IMR-90 (cell line): ENCODE measurements at regions of chr12 and their contacts with region 1.

Region 1: DNA sequence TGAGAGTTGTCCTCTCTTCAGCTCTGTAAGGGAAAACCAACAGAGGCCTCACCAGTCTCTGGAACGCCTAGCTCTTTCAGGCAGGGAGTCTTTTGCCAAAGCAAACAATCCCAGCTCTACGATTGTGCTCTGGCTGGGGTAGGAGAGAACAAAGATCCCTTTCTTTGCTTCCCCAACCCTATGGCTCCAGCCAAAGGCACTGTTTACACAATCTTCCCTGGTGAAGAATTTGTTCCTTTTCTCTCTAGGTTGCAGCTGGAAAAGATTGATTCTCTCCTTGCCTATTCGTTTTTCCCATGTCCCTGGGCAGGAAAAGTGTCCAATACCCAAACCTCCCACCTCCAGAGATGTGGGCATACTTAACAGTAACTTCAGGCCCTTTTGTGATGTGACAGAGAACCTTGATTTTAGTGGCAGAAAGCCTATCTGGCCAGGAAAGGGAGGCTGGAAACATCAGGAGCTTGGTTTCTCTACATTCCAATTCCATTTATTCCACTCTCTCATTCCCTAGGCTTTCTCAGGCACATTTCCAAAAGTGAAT is 16.8 kb downstream of the ATP5MC2 start:
- DNase-seq: peak; percentile 88
- ATAC-seq: peak; percentile 93
- H3K4me3 ChIP-seq: no peak overlapping the region
- H3K27ac ChIP-seq: peak overlapping the region; percentile 91
- H3K4me1 ChIP-seq: peaks cover 13% of the 10 kb centered on the region
- H3K27me3 ChIP-seq: no peaks in the 10 kb centered on the region
- CTCF ChIP-seq: no peak
- POLR2A ChIP-seq: no peak
- RAD21 ChIP-seq: no peak

Region 2: GRCh38 chr12:53585448-53586125 is 73.5 kb before region 1 on chr12:
- CTCF ChIA-PET with region 1: no interaction called
- POLR2A ChIA-PET with region 1: no interaction called
- dilution Hi-C with region 1: no loop called
- in situ Hi-C with region 1: no loop called
- intact Hi-C with region 1: no loop called
- DNase-seq: no peak
- ATAC-seq: no peak
- H3K4me3 ChIP-seq: no peak overlapping the region
- H3K27ac ChIP-seq: no peak overlapping the region
- H3K4me1 ChIP-seq: no peaks in the 10 kb centered on the region
- H3K27me3 ChIP-seq: no peaks in the 10 kb centered on the region
- CTCF ChIP-seq: no peak
- POLR2A ChIP-seq: no peak
- RAD21 ChIP-seq: no peak

Region 3: DNA sequence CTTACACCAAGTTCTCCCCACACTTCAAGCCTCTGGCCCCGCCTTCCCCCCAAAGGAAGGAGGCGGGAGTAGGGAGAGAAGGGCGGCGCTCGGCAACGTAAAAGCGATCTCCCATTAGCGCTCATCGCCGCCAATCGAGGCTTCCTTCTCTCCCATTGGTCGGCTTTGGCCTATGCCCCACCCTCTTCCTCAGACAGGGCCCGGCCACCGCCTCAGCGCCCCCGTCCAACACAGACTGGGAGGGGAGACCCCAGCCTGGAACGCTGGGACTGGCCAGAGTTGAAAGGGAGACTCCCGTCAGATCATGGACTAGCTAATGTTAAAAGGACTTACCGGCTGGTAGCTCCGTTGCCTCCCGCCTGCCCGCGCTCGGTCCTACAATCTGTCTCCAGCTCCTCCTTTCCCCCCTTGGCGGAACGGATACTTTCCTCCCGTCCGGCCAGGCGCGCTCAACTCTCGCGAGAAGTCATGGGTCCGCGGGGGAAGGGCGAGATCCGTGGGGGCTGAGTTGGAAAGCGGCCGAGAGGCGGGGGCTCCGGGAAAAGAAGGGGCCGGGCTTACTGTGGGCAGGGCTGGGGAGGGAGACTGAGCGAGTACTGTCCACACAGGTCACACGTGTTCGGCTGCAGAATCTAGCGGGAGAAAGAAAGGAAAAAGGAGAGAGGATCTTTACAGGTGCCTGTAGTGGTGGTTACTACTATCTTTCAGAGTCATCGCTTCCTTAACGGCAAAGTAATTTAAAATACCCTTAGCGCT is 33.0 kb before region 1 on chr12 and contains the start of gene ATF7:
- CTCF ChIA-PET with region 1: no interaction called
- POLR2A ChIA-PET with region 1: no interaction called
- dilution Hi-C with region 1: no loop called
- in situ Hi-C with region 1: no loop called
- intact Hi-C with region 1: no loop called
- DNase-seq: peak; percentile 97
- ATAC-seq: peak; percentile 98
- H3K4me3 ChIP-seq: peak within 1 kb of the TSS; percentile 70
- H3K27ac ChIP-seq: peak within 1 kb of the TSS; percentile 95
- H3K4me1 ChIP-seq: peaks cover 4% of the 10 kb centered on the region
- H3K27me3 ChIP-seq: no peaks in the 10 kb centered on the region
- CTCF ChIP-seq: no peak
- POLR2A ChIP-seq: peak; percentile 75
- RAD21 ChIP-seq: no peak
- total RNA-seq, gene ATF7: 7.0 and 9.4 TPM in 2 replicates

Region 4: GRCh38 chr12:53643232-53643979 is 15.7 kb before region 1 on chr12:
- CTCF ChIA-PET with region 1: no interaction called
- POLR2A ChIA-PET with region 1: no interaction called
- dilution Hi-C with region 1: no loop called
- in situ Hi-C with region 1: no loop called
- intact Hi-C with region 1: loop called (anchors 1 kb)
- DNase-seq: no peak
- ATAC-seq: no peak
- H3K4me3 ChIP-seq: no peak overlapping the region
- H3K27ac ChIP-seq: no peak overlapping the region
- H3K4me1 ChIP-seq: no peaks in the 10 kb centered on the region
- H3K27me3 ChIP-seq: no peaks in the 10 kb centered on the region; the same call in 1 of the 2 replicates
- CTCF ChIP-seq: no peak
- POLR2A ChIP-seq: no peak
- RAD21 ChIP-seq: no peak